Mammary epithelial cell (primary cell): ENCODE measurements at regions of chr4 and their contacts with region 1.

Region 1: GRCh38 chr4:5998333-5998936 is 19.8 kb downstream of the C4orf50 start:
- DNase-seq: peak; percentile 20
- H3K4me3 ChIP-seq: no peak overlapping the region
- H3K27ac ChIP-seq: no peak overlapping the region
- H3K4me1 ChIP-seq: no peaks in the 10 kb centered on the region
- H3K27me3 ChIP-seq: no peaks in the 10 kb centered on the region
- CTCF ChIP-seq: peak; percentile 87 to 91

Region 2: DNA sequence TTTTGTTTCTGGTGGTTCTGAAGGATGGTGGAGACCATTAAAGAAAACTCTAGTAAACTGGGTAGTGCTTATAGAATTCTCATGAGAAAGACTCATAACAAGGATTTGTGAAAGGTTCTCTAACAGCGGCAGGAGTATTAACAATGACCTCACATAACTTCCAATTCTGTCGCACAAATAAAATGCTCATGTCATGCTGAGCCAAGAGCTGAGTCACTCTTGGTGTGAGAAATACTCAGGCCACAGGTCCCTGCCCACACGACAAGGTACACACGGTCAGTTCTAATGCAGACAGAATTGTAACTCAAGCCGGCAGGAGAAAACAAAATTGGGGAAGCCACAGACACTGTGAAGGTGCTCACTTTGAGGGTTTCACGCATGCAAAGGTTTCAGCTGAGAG is 54.2 kb after region 1 on chr4:
- CTCF ChIA-PET with region 1: no interaction called
- dilution Hi-C with region 1: no loop called
- in situ Hi-C with region 1: no loop called
- intact Hi-C with region 1: no loop called
- DNase-seq: no peak
- H3K4me3 ChIP-seq: no peak overlapping the region
- H3K27ac ChIP-seq: no peak overlapping the region
- H3K4me1 ChIP-seq: no peaks in the 10 kb centered on the region
- H3K27me3 ChIP-seq: no peaks in the 10 kb centered on the region
- CTCF ChIP-seq: no peak

Region 3: GRCh38 chr4:6095023-6095752 is 96.8 kb after region 1 on chr4:
- CTCF ChIA-PET with region 1: no interaction called
- dilution Hi-C with region 1: loop called (anchors 5 kb)
- in situ Hi-C with region 1: no loop called
- intact Hi-C with region 1: no loop called
- DNase-seq: peak; percentile 16
- H3K4me3 ChIP-seq: no peak overlapping the region
- H3K27ac ChIP-seq: no peak overlapping the region
- H3K4me1 ChIP-seq: no peaks in the 10 kb centered on the region
- H3K27me3 ChIP-seq: no peaks in the 10 kb centered on the region
- CTCF ChIP-seq: no peak